ENCODE measurements at regions of chr3 and their contacts with region 1.

Region 1: DNA sequence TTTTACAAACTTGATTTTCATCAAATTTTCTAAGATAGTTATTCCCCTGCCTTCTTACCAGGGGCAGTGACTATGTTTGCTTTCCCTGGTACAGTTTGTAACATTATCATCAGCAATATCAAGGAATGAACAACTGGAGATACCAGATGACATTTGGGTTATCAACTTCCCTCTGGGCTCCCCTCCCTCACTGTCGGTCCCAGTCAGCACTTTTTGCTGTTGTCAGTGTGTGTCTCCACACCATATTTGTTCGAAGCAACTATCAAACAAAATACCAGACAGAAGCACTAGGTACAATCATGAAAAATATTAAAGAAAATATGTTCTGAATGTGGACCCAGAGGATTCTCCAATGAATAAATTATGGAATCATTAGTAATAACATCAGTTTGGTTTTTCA is 75.3 kb downstream of the PLOD2 start:
- DNase-seq: no peak
- ATAC-seq: no peak
- H3K4me3 ChIP-seq: no peak overlapping the region
- H3K27ac ChIP-seq: no peak overlapping the region
- H3K4me1 ChIP-seq: no peaks in the 10 kb centered on the region
- H3K27me3 ChIP-seq: no peaks in the 10 kb centered on the region
- CTCF ChIP-seq: no peak

Region 2: GRCh38 chr3:146052791-146053310 is 32.8 kb before region 1 on chr3:
- CTCF ChIA-PET with region 1: no interaction called
- POLR2A ChIA-PET with region 1: no interaction called
- intact Hi-C with region 1: no loop called
- DNase-seq: no peak
- ATAC-seq: no peak
- H3K4me3 ChIP-seq: no peak overlapping the region
- H3K27ac ChIP-seq: no peak overlapping the region
- H3K4me1 ChIP-seq: no peaks in the 10 kb centered on the region
- H3K27me3 ChIP-seq: no peaks in the 10 kb centered on the region
- CTCF ChIP-seq: no peak

Region 3: GRCh38 chr3:146125951-146126350 is 40.3 kb after region 1 on chr3:
- CTCF ChIA-PET with region 1: no interaction called
- POLR2A ChIA-PET with region 1: no interaction called
- intact Hi-C with region 1: loop called (anchors 5 kb)
- DNase-seq: peak; percentile 75
- ATAC-seq: peak; percentile 71
- H3K4me3 ChIP-seq: no peak overlapping the region
- H3K27ac ChIP-seq: no peak overlapping the region
- H3K4me1 ChIP-seq: peaks cover 13% of the 10 kb centered on the region
- H3K27me3 ChIP-seq: no peaks in the 10 kb centered on the region
- CTCF ChIP-seq: no peak

Measured in PC-3 (cell line).